ENCODE measurements at regions of chr12 and their contacts with region 1.

Region 1: GRCh38 chr12:69834147-69834546 is 9.1 kb downstream of the MYRFL start:
- DNase-seq: no peak
- H3K4me3 ChIP-seq: no peak overlapping the region
- H3K27ac ChIP-seq: no peak overlapping the region
- H3K4me1 ChIP-seq: peaks cover 10% of the 10 kb centered on the region
- H3K27me3 ChIP-seq: no peaks in the 10 kb centered on the region
- CTCF ChIP-seq: no peak

Region 2: DNA sequence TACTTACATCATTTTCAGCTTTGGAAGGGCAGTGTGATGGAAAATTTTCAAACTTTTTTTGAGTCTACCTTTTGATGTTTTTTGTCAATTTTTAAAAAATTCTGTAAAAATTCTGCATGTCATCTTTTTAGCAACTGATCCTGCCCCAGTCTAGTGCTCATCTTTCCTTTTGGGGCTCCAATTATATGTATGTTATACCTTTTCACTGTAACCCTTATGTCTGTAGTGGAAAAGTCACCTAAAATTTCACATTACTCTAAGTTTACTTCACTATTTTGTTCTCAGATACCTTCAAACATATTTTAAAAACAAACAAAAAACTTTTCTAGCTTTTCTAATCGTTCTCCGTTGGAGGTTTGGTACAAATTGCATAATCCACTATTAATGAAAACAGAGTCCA is 41.6 kb before region 1 on chr12:
- CTCF ChIA-PET with region 1: interaction called, 11 read pairs
- POLR2A ChIA-PET with region 1: no interaction called
- intact Hi-C with region 1: no loop called
- DNase-seq: no peak
- H3K4me3 ChIP-seq: no peak overlapping the region
- H3K27ac ChIP-seq: no peak overlapping the region
- H3K4me1 ChIP-seq: no peaks in the 10 kb centered on the region
- H3K27me3 ChIP-seq: no peaks in the 10 kb centered on the region
- CTCF ChIP-seq: no peak

Region 3: DNA sequence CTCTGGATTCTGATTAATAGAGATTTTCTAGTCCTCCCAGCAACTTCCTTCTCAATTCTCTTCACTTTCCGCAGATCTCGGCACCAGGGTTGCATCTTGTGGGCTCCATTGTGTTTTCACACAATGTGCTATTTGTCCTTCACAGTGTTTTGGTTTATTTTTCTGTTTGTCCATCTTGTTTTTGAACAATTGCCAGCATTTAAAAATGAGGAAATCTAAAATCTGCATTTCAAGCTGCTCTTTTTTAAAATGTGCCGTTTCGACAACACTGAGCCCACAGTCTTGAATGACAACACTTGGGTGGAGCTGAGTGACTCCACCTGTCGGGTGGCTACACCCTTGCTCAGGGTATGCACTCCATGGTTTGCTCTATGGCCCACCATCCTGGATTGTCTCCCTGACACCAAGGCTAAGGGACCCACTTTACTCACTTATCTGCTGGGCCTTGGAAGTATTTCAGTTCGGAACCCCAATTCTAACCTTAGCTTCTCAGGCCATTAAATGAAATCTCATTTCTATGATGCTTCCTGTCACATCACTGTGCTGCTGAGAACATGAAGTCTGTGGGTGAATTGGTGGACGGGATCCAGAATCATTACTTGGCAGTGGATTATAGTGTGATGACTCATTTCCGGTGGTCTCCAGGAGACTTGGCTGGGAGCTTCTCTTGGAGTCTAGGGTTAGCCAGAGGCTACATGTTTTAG is 12.5 kb before region 1 on chr12:
- CTCF ChIA-PET with region 1: no interaction called
- POLR2A ChIA-PET with region 1: no interaction called
- intact Hi-C with region 1: no loop called
- DNase-seq: peak; percentile 97
- H3K4me3 ChIP-seq: peak overlapping the region; percentile 32
- H3K27ac ChIP-seq: peak overlapping the region; percentile 81
- H3K4me1 ChIP-seq: peaks cover 32% of the 10 kb centered on the region
- H3K27me3 ChIP-seq: no peaks in the 10 kb centered on the region
- CTCF ChIP-seq: no peak

Measured in A673 (cell line).